Lower lobe of right lung (tissue), 2 donors: ENCODE measurements at regions of chr5 and their contacts with region 1.

Region 1: GRCh38 chr5:96595300-96596090 is 66.7 kb upstream of the CAST start:
- DNase-seq: no peak
- ATAC-seq: no peak
- H3K4me3 ChIP-seq: no peak overlapping the region
- H3K27ac ChIP-seq: no peak overlapping the region
- H3K4me1 ChIP-seq: no peaks in the 10 kb centered on the region
- H3K27me3 ChIP-seq: no peaks in the 10 kb centered on the region
- CTCF ChIP-seq: peak; percentile 47

Region 2: DNA sequence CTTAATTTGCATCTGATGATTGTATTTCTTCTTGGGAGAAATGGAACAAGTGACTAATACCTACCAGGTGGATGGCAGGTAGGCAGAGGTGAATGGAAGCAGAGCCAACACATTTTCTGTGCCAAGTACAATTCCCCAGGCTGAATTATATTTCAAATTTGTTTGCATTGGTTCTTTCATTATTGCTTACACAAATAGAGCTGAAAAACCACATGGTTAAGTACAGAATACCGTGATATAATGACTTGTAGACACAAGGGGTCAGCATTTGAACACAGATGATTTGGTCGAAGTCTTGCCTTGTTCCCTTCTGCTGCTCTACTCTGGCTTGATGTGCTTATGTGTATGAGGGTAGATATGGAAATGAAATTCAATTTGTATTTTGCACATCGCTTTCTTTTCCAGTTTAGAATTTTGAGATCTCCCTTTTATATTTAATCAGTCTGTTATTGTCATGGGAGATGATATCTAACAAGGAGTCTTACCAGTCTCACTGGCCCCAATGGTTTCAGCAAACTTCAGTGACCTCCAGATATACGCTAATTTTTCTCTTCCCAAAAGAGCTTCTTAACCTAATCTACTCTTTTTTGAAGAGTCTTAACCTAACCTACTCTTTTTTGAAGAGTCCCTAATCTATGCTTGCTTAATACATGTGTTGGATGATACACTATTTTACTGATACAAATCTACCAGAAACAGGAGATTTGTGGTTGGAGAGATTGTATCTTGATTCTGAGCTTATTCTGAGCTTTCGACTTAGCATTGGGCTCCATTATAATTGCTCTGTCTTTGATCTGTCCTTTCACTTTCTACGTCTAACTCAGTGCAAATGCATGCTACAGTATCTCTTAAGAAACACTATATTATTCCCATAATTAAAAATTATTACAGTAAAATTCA is 250.6 kb before region 1 on chr5:
- intact Hi-C with region 1: loop called (anchors 5 kb)
- DNase-seq: no peak
- ATAC-seq: peak; percentile 88 to 89
- H3K4me3 ChIP-seq: no peak overlapping the region
- H3K27ac ChIP-seq: no peak overlapping the region
- H3K4me1 ChIP-seq: no peaks in the 10 kb centered on the region
- H3K27me3 ChIP-seq: no peaks in the 10 kb centered on the region
- CTCF ChIP-seq: peak; percentile 58

Region 3: GRCh38 chr5:96350678-96351077 is 244.8 kb before region 1 on chr5:
- intact Hi-C with region 1: loop called (anchors 5 kb)
- DNase-seq: no peak
- ATAC-seq: peak in 1 of 2 donors; percentile 32
- H3K4me3 ChIP-seq: no peak overlapping the region
- H3K27ac ChIP-seq: no peak overlapping the region
- H3K4me1 ChIP-seq: no peaks in the 10 kb centered on the region
- H3K27me3 ChIP-seq: no peaks in the 10 kb centered on the region
- CTCF ChIP-seq: no peak

Region 4: GRCh38 chr5:96844476-96844990 is 249.0 kb after region 1 on chr5:
- intact Hi-C with region 1: no loop called
- DNase-seq: no peak
- ATAC-seq: no peak
- H3K4me3 ChIP-seq: no peak overlapping the region
- H3K27ac ChIP-seq: no peak overlapping the region
- H3K4me1 ChIP-seq: no peaks in the 10 kb centered on the region
- H3K27me3 ChIP-seq: no peaks in the 10 kb centered on the region
- CTCF ChIP-seq: no peak